Aorta (tissue), 5 donors: ENCODE measurements at regions of chr14 and their contacts with region 1.

Region 1: GRCh38 chr14:60184146-60184904 is 19.1 kb upstream of the DHRS7 start:
- DNase-seq: no peak
- ATAC-seq: peak; percentile 76
- H3K4me3 ChIP-seq: peak overlapping the region; percentile 67 to 79
- H3K27ac ChIP-seq: no peak overlapping the region
- H3K4me1 ChIP-seq: no peaks in the 10 kb centered on the region
- H3K27me3 ChIP-seq: no peaks in the 10 kb centered on the region

Region 2: DNA sequence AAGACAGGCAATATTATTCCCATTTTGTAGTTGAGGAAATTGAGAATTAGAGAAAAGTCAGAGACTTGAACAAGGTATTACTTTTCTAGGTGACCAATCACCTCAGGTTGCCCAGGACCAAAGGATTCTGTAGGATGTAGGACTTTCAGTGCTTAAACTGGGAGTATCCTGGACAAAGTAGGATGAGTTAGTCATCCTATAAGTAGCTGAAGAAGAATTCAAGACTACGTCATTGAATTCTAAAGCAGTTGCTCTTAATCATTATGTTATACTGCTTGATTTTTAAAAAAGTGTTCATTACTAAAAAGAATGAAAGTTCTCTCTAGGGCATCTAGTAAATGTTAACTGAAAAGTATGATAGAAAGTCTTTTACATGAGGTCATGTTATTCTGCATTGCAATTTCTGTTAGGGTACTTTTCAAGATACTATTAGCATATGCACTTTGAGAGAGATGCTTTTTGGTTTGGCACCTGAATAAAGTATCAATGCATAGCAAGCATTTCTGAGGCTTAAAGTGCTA is 415.4 kb before region 1 on chr14:
- intact Hi-C with region 1: loop called in 1 of 2 experiments (anchors 10 kb)
- DNase-seq: no peak
- ATAC-seq: no peak
- H3K4me3 ChIP-seq: no peak overlapping the region
- H3K27ac ChIP-seq: no peak overlapping the region
- H3K4me1 ChIP-seq: peaks cover 0 to 1% of the 10 kb centered on the region in 2 donors
- H3K27me3 ChIP-seq: no peaks in the 10 kb centered on the region

Region 3: DNA sequence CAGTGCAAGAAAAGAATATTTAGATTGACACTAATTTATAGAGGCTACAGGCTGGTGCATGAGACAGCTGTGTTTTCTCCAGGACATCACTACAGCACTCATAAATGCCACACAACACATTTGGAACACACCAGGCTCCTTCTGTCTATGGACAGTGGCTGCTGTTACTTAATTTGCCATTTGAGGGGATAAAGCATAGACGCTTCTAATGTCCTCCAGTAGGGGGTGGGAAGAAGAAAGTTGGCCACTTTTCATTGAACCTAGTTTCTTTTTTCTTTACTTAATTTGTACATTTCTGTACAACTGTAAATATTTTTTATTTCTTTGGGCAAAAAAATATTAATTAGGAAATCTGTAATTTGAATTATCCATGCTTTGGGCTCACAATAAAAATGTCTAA is 301.4 kb before region 1 on chr14:
- intact Hi-C with region 1: no loop called
- DNase-seq: no peak
- ATAC-seq: no peak
- H3K4me3 ChIP-seq: no peak overlapping the region
- H3K27ac ChIP-seq: no peak overlapping the region
- H3K4me1 ChIP-seq: no peaks in the 10 kb centered on the region
- H3K27me3 ChIP-seq: peaks cover 0 to 2% of the 10 kb centered on the region in 2 donors

Region 4: GRCh38 chr14:59964251-59965007 is 219.9 kb before region 1 on chr14:
- intact Hi-C with region 1: loop called (anchors 1 to 2 kb)
- DNase-seq: no peak
- ATAC-seq: no peak
- H3K4me3 ChIP-seq: no peak overlapping the region
- H3K27ac ChIP-seq: no peak overlapping the region
- H3K4me1 ChIP-seq: no peaks in the 10 kb centered on the region
- H3K27me3 ChIP-seq: no peaks in the 10 kb centered on the region

Region 5: DNA sequence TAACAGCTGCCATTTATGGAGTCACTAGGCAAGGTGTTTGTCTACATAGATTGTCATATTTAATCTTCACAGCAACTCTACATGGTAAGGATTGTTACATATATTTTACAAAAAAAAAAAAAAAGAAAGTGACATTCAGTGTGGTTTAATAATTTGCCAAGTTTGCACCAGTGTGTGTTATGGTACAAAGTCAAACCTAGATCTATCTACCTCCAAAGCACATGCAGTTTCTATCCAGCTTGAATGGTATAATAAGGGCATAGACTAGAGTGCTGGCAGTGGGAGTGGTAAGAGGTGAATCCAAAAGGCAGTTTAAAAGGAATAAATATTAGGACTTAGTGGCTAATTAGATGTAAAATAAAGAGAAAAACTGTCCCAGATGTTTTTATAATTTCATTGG is 158.8 kb before region 1 on chr14:
- intact Hi-C with region 1: no loop called
- DNase-seq: no peak
- ATAC-seq: no peak
- H3K4me3 ChIP-seq: no peak overlapping the region
- H3K27ac ChIP-seq: no peak overlapping the region
- H3K4me1 ChIP-seq: no peaks in the 10 kb centered on the region
- H3K27me3 ChIP-seq: no peaks in the 10 kb centered on the region

Region 6: GRCh38 chr14:60064491-60065072 is 119.7 kb before region 1 on chr14:
- intact Hi-C with region 1: loop called (anchors 2 kb)
- DNase-seq: no peak
- ATAC-seq: no peak
- H3K4me3 ChIP-seq: no peak overlapping the region
- H3K27ac ChIP-seq: no peak overlapping the region
- H3K4me1 ChIP-seq: no peaks in the 10 kb centered on the region
- H3K27me3 ChIP-seq: no peaks in the 10 kb centered on the region

Region 7: DNA sequence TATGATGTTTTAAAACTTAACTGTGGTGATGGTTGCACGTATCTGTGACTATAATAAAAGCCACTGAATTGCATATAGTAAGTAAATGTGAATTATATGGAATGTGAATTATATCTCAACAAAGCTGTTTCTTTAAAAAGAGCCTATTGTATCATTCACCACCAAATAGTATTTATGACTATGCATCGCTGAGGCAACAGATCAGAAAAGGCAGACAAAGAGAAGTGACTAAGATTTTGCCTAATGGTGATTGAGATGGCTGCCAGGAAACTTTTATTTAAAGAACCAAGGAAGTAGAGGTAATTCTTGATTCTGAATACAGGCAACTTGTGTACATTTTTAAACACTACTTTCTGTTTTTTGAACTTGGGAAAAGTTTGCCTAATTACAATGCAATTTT is 50.8 kb before region 1 on chr14:
- intact Hi-C with region 1: no loop called
- DNase-seq: no peak
- ATAC-seq: no peak
- H3K4me3 ChIP-seq: no peak overlapping the region
- H3K27ac ChIP-seq: no peak overlapping the region
- H3K4me1 ChIP-seq: no peaks in the 10 kb centered on the region
- H3K27me3 ChIP-seq: no peaks in the 10 kb centered on the region